Mammary epithelial cell (primary cell): ENCODE measurements at regions of chr22 and their contacts with region 1.

Region 1: DNA sequence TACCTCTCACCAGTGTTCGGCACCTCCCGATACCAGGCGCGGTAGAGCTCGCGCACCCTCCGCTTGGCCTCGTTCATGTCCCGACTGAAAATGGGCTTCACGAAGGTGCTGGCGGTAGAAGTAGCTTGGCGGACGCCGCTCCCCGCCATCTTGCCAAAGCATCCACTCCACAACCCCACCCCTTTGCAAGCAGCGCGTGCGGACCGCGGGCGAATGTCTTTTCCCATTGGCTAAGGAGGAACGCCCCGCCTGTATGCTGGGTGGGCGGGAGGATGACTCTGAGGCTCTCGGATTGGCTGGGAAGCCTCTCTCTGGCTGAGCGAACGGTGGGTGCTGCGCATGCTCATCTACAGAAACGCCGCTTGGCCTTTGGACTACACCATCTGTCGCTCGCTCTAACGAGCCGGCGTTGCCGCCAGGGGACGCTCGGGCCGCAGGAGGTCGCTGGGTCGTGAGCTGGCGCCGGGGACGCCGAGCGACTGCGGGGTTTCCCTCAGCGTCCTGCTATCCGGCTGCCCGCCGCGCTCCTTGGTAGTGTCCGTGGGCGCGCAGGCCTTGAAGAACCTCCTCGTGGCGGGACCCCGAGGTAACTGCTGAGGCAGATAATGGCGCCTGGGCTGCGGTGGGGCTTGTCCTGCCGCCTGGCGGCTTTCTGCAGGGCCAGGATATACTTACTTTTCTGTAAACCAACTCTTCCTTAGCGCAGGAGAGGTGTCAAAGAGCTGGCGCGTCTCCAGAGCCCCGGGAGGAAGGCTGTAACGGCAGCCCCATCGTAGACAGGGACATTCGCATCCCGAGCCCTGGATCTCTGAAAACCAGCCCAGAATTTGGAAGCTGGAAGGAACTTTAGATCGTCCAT is at the start of gene NDUFA6:
- DNase-seq: peak; percentile 99
- H3K4me3 ChIP-seq: peak within 1 kb of the TSS; percentile 66 to 92 (median 82)
- H3K27ac ChIP-seq: peak within 1 kb of the TSS; percentile 89
- H3K4me1 ChIP-seq: no peaks in the 10 kb centered on the region
- H3K27me3 ChIP-seq: no peaks in the 10 kb centered on the region
- CTCF ChIP-seq: peak; percentile 81 to 99
- total RNA-seq, gene NDUFA6: 32.2 to 98.7 TPM

Region 2: DNA sequence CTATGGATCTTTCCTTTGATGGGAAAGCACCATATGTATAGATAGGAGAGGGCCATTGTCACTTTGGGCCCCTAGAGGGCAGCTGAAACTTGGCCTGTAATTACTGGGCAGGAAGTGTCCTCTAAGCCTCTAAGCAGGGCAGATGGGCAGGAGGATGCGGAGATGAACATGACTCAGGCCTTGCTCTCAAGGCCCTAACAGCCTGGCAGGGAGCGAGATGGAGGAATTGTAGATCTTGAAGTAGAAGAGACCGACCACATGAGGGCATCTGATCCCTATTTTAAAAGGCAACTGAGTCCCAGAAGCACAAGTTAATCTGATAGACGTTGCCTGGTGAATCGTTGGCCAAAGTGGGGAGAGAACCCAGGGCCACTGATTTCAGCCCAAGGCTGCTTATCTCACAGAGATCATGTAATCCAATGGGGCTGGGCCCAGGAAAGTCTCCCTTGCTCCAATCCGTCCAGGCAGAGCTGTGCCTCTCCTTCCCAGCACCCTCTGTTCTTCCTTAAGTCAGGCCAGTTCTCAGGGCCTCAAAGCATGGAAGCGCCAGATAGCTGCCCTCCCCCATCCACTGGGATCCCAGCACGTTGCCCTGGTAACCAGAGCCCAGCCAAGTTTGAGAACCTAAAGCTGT is 124.1 kb before region 1 on chr22:
- CTCF ChIA-PET with region 1: interaction called, 3 read pairs
- dilution Hi-C with region 1: no loop called
- in situ Hi-C with region 1: no loop called
- intact Hi-C with region 1: loop called (anchors 1 kb)
- DNase-seq: peak; percentile 87
- H3K4me3 ChIP-seq: no peak overlapping the region
- H3K27ac ChIP-seq: no peak overlapping the region
- H3K4me1 ChIP-seq: peaks cover 7% of the 10 kb centered on the region
- H3K27me3 ChIP-seq: no peaks in the 10 kb centered on the region
- CTCF ChIP-seq: peak; percentile 45 to 52

Region 3: DNA sequence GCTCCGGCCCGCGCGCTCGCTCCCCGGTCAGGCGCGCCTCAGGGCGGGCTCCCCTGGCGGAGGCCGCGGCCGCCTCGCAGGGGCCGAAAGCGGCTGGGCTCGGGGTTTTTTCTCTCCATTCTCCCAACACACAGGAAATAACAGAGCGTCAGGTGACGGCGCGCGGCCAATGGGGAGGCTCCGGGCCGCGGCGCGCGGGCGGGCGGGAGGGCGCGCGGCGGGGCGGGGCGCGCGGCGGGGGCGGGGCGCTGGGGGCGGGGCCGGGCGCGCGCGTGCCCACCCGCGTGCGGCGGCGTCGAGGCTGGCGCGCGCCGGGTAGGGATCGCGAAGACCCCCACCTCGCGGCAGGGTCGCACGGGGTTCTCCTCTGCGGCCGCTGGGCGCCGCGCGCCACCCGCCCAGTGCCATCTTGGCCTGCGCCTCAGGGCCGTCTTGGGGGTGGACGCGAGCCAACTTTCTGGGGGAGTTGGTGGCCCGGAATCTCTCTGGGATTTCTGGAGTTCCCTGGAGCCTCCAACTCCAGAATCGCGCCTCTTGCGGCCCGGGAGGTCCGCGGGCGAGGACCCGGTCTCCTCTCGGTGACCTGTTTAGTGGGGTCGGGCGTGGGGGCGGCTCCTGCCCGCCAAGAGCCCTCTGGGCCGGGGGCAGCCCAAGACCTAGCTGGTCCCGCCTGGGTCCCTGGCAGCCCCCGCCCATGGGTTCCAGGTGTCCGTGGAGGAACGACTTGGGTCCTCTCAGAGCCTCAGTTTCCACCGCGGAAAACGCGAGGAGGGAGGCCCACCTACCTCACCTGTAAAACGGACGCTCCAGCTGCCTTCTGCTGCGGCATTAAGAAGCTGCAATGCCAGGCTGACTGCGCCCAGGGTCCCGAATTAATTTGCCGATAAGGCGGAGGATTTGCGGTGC is 179.9 kb after region 1 on chr22 and contains the start of gene TCF20:
- CTCF ChIA-PET with region 1: interaction called, 6 read pairs
- dilution Hi-C with region 1: no loop called
- in situ Hi-C with region 1: no loop called
- intact Hi-C with region 1: loop called (anchors 1 kb)
- DNase-seq: peak; percentile 70
- H3K4me3 ChIP-seq: peak within 1 kb of the TSS; percentile 82 to 97 (median 89)
- H3K27ac ChIP-seq: peak within 1 kb of the TSS; percentile 78
- H3K4me1 ChIP-seq: peaks cover 16% of the 10 kb centered on the region
- H3K27me3 ChIP-seq: no peaks in the 10 kb centered on the region
- CTCF ChIP-seq: peak in 1 of 2 donors; percentile 6
- total RNA-seq, gene TCF20: 49.2 to 62.5 TPM

Region 4: DNA sequence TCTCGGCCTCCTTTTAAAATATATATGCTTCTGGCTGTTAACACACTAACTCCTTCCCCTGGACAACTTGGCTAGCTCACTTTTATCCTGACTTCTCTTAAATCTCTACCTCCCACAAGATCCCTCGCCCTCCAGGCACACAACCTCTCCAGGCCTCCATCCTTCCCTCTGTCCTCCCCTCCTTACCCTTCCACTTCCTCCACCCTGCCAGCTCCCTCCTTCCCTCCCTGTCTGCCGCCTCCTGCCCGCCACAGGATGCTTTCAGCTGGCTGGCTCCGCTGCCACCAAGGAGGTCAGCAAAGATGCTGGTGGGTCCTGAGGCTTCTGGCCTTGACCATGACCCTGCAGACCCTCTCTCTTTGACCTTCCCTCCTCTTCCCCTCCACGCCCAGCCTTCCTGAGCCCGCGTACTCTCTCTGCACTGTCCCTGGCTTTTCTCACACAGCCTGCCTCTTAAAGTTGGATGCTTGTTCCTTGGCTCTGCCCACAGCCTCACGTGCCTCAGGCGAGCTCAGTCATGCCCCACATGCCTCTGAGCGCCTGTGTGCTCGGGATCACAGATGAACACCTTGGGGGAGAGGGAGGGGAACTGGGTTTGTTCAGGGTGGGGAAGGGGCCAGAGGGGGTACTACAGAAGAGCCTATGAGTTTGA is 334.6 kb after region 1 on chr22:
- CTCF ChIA-PET with region 1: interaction called, 24 read pairs
- dilution Hi-C with region 1: no loop called
- in situ Hi-C with region 1: loop called in 1 of 2 experiments (anchors 10 kb)
- intact Hi-C with region 1: no loop called
- DNase-seq: peak; percentile 66
- H3K4me3 ChIP-seq: peak overlapping the region in 1 of 3 experiments; percentile 38
- H3K27ac ChIP-seq: no peak overlapping the region
- H3K4me1 ChIP-seq: peaks cover 14% of the 10 kb centered on the region
- H3K27me3 ChIP-seq: no peaks in the 10 kb centered on the region
- CTCF ChIP-seq: no peak

Region 5: DNA sequence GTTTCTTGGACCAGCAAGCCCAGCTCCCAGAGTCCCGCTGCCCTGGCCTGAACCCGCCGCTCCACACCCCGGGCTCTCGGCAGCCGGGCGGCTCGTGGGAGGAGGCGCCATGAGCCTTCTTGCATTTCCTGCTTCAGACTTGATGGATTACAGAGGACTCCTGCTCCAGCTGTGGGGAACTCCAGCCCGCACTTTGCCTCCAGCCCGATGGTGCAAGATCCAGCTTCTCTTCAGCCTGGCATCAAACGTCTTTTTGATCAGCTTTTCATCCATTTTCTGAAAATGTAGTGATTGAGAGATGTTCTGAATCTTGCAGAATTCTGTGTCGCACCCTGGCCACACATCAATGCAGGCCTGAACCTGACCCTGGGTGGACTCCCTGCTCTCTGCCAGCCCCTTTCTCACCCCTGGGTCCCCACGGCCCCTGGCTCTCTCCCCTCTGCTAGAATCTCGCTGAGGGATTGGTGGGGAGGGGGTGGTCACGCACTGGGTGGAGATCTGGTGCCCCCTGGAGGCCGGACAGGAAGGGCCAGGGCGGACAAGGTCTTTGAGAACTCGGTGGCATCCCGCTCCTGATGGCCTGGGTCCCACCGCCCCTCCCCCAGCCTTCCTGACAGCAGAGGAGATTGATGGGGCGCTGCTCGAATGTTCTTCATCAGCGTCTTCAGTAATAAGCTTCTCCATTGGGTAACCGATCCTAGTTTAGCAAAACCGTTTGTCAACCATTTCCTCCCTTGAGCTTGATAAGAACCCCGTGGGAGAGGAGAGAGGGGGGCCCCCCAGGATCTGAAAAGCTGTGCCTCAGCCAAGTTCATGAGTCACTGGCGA is 353.5 kb after region 1 on chr22:
- CTCF ChIA-PET with region 1: interaction called, 5 read pairs
- dilution Hi-C with region 1: no loop called
- in situ Hi-C with region 1: loop called in 1 of 2 experiments (anchors 10 kb)
- intact Hi-C with region 1: loop called (anchors 2 kb)
- DNase-seq: peak; percentile 84
- H3K4me3 ChIP-seq: peak overlapping the region in 2 of 3 experiments; percentile 10 to 30
- H3K27ac ChIP-seq: no peak overlapping the region
- H3K4me1 ChIP-seq: peaks cover 22% of the 10 kb centered on the region
- H3K27me3 ChIP-seq: no peaks in the 10 kb centered on the region
- CTCF ChIP-seq: peak; percentile 52 to 70